Psoas muscle (tissue), 8 donors: ENCODE measurements at regions of chr3 and their contacts with region 1.

Region 1: GRCh38 chr3:61919402-61919801 is 358.0 kb downstream of the PTPRG start:
- DNase-seq: no peak
- ATAC-seq: no peak
- H3K4me3 ChIP-seq: no peak overlapping the region
- H3K27ac ChIP-seq: no peak overlapping the region
- H3K4me1 ChIP-seq: peaks cover 64% of the 10 kb centered on the region
- H3K27me3 ChIP-seq: no peaks in the 10 kb centered on the region
- CTCF ChIP-seq: no peak

Region 2: GRCh38 chr3:61872077-61872706 is 47.2 kb before region 1 on chr3:
- intact Hi-C with region 1: loop called in 1 of 2 experiments (anchors 5 kb)
- DNase-seq: no peak
- ATAC-seq: no peak
- H3K4me3 ChIP-seq: no peak overlapping the region
- H3K27ac ChIP-seq: no peak overlapping the region
- H3K4me1 ChIP-seq: peaks cover 40% of the 10 kb centered on the region
- H3K27me3 ChIP-seq: no peaks in the 10 kb centered on the region
- CTCF ChIP-seq: no peak

Region 3: DNA sequence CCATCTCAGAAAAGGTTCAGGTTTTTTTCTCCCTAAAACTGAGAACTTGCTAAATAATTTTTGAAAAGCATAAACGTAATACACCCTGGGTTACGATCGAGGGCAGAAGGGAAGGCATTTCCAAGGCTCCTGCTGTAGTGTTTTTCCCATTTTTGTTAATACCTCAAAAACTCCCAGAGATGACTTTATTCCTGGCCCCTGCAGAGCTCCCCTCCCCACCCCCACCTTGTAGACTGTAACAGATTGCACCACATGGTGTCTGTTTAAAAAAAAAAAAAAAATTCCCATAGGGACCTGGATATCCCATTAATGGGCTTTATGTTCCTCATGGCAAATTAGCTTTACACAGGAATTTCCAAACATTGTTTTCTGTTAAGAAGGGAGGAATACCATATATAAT is 415.8 kb after region 1 on chr3:
- intact Hi-C with region 1: no loop called
- DNase-seq: no peak
- ATAC-seq: no peak
- H3K4me3 ChIP-seq: no peak overlapping the region
- H3K27ac ChIP-seq: no peak overlapping the region
- H3K4me1 ChIP-seq: no peaks in the 10 kb centered on the region
- H3K27me3 ChIP-seq: peaks cover 0 to 2% (median 0%) of the 10 kb centered on the region in 3 donors
- CTCF ChIP-seq: no peak